Pancreas (tissue), 10 donors: ENCODE measurements at regions of chr2 and their contacts with region 1.

Region 1: DNA sequence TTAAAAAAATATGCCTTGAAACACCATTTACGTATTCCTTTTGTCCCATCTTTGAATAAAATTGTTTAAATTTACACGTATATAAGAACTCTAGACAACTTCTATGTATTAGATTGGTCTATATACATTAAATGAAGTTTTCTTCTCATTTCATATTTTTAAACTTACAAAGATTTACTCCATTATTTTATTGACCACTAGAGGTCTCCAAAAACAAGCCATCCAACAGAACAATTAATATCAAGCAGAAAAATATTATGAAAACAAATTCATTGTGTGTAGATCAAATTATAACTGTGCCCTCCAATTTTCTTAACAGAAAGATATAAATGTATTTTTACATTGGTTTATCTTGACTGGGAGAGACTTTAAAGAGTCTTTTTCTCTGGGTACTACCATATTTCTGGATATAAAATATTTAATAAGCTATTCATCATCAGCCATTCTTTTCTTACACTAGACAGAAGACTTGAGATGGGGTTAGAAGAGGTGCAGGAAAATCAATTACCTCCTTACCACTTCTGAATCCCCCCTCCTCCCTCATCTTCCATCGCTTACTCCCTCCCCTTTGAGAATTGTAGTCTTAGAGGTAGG is 66.5 kb downstream of the DPP4 start:
- DNase-seq: no peak
- ATAC-seq: no peak
- H3K4me3 ChIP-seq: no peak overlapping the region
- H3K27ac ChIP-seq: no peak overlapping the region
- H3K4me1 ChIP-seq: no peaks in the 10 kb centered on the region
- H3K27me3 ChIP-seq: no peaks in the 10 kb centered on the region
- CTCF ChIP-seq: peak; percentile 36 to 62 (median 61)

Region 2: GRCh38 chr2:161651547-161651946 is 356.0 kb before region 1 on chr2:
- intact Hi-C with region 1: no loop called
- DNase-seq: peak in 3 of 6 donors; percentile 14 to 54 (median 48)
- ATAC-seq: no peak
- H3K4me3 ChIP-seq: no peak overlapping the region
- H3K27ac ChIP-seq: no peak overlapping the region
- H3K4me1 ChIP-seq: no peaks in the 10 kb centered on the region
- H3K27me3 ChIP-seq: no peaks in the 10 kb centered on the region
- CTCF ChIP-seq: no peak

Region 3: GRCh38 chr2:161965994-161966393 is 41.5 kb before region 1 on chr2:
- intact Hi-C with region 1: no loop called
- DNase-seq: no peak
- ATAC-seq: no peak
- H3K4me3 ChIP-seq: no peak overlapping the region
- H3K27ac ChIP-seq: no peak overlapping the region
- H3K4me1 ChIP-seq: no peaks in the 10 kb centered on the region
- H3K27me3 ChIP-seq: no peaks in the 10 kb centered on the region
- CTCF ChIP-seq: no peak

Region 4: DNA sequence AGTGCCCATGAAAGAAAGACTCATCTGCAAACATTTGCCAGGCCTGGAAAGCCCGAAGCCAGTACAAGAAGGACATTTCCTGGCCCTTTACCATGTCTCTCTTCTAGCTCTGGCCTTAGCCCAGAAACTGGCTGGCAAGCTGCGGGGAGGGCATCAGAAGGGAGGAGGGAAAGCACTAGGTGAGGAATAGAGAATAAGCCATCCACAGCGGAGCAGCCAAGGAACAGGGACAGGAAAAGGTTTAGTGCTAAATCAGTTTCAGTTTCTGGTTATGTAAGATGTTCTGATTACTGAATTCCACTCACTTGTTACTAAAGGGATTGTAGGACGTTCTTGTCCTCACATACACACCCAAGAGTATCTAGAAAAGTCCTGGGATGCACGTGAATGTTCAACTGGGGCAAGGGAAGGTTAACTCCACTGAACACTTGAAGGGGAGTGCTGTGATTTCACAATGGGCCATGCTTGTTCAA is 111.1 kb after region 1 on chr2:
- intact Hi-C with region 1: loop called in 2 of 3 experiments (anchors 5 to 10 kb)
- DNase-seq: no peak
- ATAC-seq: peak in 3 of 4 donors; percentile 20 to 35 (median 33)
- H3K4me3 ChIP-seq: no peak overlapping the region
- H3K27ac ChIP-seq: no peak overlapping the region
- H3K4me1 ChIP-seq: no peaks in the 10 kb centered on the region
- H3K27me3 ChIP-seq: no peaks in the 10 kb centered on the region
- CTCF ChIP-seq: no peak

Region 5: DNA sequence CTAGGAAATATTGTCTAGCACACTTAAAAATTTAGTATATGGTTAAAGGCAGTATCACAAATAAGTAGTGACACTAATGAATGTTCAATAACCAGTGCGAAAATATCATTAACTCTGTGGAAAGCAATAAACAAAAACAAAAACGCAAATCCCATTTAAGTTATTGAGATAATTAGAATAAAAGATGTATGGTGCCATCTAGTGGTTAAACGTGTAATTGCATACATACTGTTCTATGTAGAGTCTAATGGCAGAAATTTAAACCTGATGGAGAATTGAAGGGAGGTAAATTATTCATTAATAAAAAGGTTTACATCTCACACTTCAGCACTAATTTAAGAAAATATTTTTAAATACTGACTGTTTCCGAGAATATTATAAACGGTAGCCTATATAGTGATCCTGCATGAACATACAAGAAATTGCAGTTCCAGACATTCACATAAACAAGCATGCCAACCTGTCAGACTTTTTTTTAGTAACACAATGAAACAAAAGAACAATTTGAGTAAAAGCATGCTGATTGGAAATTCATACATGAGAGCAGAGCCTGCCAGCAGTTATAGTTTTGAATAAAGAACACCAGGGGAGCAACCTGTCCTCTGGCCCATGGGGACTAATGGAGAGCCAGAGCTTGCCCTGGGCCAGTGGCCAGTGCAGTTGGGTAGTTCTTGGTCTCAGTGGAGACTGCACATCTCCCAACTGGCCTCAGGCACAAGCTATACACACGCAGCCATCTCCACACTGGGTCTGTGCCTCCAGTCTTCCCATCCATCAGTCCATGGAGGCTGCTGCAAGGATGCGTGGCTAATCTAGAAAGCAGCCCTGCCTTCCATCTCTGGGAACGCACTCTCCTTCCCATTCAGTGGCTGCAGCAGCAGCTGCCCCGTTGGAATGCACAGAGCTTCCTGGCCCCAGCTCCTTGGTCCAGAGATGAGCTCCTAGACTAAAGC is 116.5 kb after region 1 on chr2:
- intact Hi-C with region 1: loop called (anchors 5 to 10 kb)
- DNase-seq: no peak
- ATAC-seq: peak in 3 of 4 donors; percentile 66 to 82 (median 77)
- H3K4me3 ChIP-seq: no peak overlapping the region
- H3K27ac ChIP-seq: no peak overlapping the region
- H3K4me1 ChIP-seq: no peaks in the 10 kb centered on the region
- H3K27me3 ChIP-seq: no peaks in the 10 kb centered on the region
- CTCF ChIP-seq: peak; percentile 63 to 82 (median 72)